ENCODE measurements at regions of chr10 and their contacts with region 1.

Region 1: DNA sequence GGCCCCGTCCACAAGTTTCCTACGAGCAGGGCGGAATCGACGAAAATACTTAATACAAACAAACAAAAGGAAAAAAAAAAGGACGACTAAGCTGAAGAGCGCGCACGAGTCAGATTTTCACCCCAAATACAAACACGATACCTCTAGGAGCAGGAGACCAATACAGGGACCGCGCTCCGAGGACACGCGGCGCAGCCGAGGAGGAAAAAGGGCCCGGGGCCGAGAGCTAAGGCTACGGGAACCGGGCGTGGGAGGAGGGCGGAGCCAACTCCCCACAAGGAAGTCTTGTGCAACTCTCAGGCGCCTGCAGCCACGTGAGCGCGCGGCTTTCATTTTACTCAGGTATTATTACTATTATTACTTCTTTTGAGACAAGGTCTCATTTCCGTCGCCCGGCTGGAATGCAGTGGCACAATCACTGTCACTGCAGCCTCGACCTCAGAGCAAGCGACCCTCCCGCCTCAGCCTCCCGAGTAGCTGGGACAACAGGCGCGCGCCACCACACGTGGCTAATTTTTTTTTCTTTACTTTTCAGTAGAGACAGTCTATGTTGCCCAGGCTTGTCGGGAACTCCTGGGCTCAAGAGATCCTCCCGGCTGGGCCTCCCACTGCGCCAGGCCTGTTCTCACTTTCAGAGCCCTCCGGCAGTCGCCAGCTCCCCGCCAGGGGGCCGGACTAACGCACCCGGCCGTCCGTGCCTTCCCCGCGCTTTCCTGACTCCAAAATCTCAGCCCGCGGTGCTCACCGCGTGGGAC is 1.2 kb downstream of the HNRNPF start:
- DNase-seq: peak; percentile 65 to 94 (median 76)
- ATAC-seq: peak; percentile 35
- H3K4me3 ChIP-seq: peak overlapping the region; percentile 80
- H3K4me3 Mint-ChIP-seq: peak overlapping the region; percentile 98
- H3K27ac ChIP-seq: peak overlapping the region; percentile 98
- H3K27ac Mint-ChIP-seq: peak overlapping the region; percentile 93
- H3K4me1 ChIP-seq: peaks cover 56% of the 10 kb centered on the region
- H3K4me1 Mint-ChIP-seq: peaks cover 45% of the 10 kb centered on the region
- H3K27me3 ChIP-seq: no peaks in the 10 kb centered on the region
- H3K27me3 Mint-ChIP-seq: no peaks in the 10 kb centered on the region
- CTCF ChIP-seq: peak; percentile 52

Region 2: GRCh38 chr10:43336641-43337318 is 71.0 kb before region 1 on chr10:
- CTCF ChIA-PET with region 1: no interaction called
- POLR2A ChIA-PET with region 1: interaction called, 12 read pairs
- intact Hi-C with region 1: no loop called
- DNase-seq: no peak
- ATAC-seq: no peak
- H3K4me3 ChIP-seq: no peak overlapping the region
- H3K4me3 Mint-ChIP-seq: no peak overlapping the region
- H3K27ac ChIP-seq: no peak overlapping the region
- H3K27ac Mint-ChIP-seq: no peak overlapping the region
- H3K4me1 ChIP-seq: peaks cover 24% of the 10 kb centered on the region
- H3K4me1 Mint-ChIP-seq: peaks cover 20% of the 10 kb centered on the region
- H3K27me3 ChIP-seq: peaks cover 0 to 5% of the 10 kb centered on the region in 2 experiments
- H3K27me3 Mint-ChIP-seq: peaks cover 8% of the 10 kb centered on the region
- CTCF ChIP-seq: no peak

Region 3: GRCh38 chr10:43372765-43373361 is 34.9 kb before region 1 on chr10:
- CTCF ChIA-PET with region 1: no interaction called
- POLR2A ChIA-PET with region 1: no interaction called
- intact Hi-C with region 1: no loop called
- DNase-seq: no peak
- ATAC-seq: no peak
- H3K4me3 ChIP-seq: no peak overlapping the region
- H3K4me3 Mint-ChIP-seq: no peak overlapping the region
- H3K27ac ChIP-seq: no peak overlapping the region
- H3K27ac Mint-ChIP-seq: no peak overlapping the region
- H3K4me1 ChIP-seq: peaks cover 8% of the 10 kb centered on the region
- H3K4me1 Mint-ChIP-seq: no peaks in the 10 kb centered on the region
- H3K27me3 ChIP-seq: no peaks in the 10 kb centered on the region
- H3K27me3 Mint-ChIP-seq: no peaks in the 10 kb centered on the region
- CTCF ChIP-seq: no peak

Region 4: GRCh38 chr10:43390759-43391158 is 17.0 kb before region 1 on chr10:
- CTCF ChIA-PET with region 1: interaction called, 11 read pairs
- POLR2A ChIA-PET with region 1: interaction called, 54 read pairs
- intact Hi-C with region 1: loop called in 1 of 2 experiments (anchors 2 kb)
- DNase-seq: peak in 9 of 14 experiments; percentile 12 to 73 (median 28)
- ATAC-seq: peak; percentile 69
- H3K4me3 ChIP-seq: no peak overlapping the region
- H3K4me3 Mint-ChIP-seq: no peak overlapping the region
- H3K27ac ChIP-seq: no peak overlapping the region
- H3K27ac Mint-ChIP-seq: peak overlapping the region; percentile 82
- H3K4me1 ChIP-seq: peaks cover 68% of the 10 kb centered on the region
- H3K4me1 Mint-ChIP-seq: peaks cover 81% of the 10 kb centered on the region
- H3K27me3 ChIP-seq: no peaks in the 10 kb centered on the region
- H3K27me3 Mint-ChIP-seq: no peaks in the 10 kb centered on the region
- CTCF ChIP-seq: peak; percentile 26

Region 5: GRCh38 chr10:43420369-43421200 is 12.8 kb after region 1 on chr10:
- CTCF ChIA-PET with region 1: no interaction called
- POLR2A ChIA-PET with region 1: interaction called, 56 read pairs
- intact Hi-C with region 1: loop called (anchors 1 kb)
- DNase-seq: peak; percentile 54 to 92 (median 72)
- ATAC-seq: peak; percentile 85
- H3K4me3 ChIP-seq: peak overlapping the region; percentile 84
- H3K4me3 Mint-ChIP-seq: peak overlapping the region; percentile 91
- H3K27ac ChIP-seq: peak overlapping the region; percentile 85 to 92
- H3K27ac Mint-ChIP-seq: peak overlapping the region; percentile 92
- H3K4me1 ChIP-seq: peaks cover 42% of the 10 kb centered on the region
- H3K4me1 Mint-ChIP-seq: peaks cover 39% of the 10 kb centered on the region
- H3K27me3 ChIP-seq: no peaks in the 10 kb centered on the region
- H3K27me3 Mint-ChIP-seq: no peaks in the 10 kb centered on the region
- CTCF ChIP-seq: peak; percentile 30

Region 6: DNA sequence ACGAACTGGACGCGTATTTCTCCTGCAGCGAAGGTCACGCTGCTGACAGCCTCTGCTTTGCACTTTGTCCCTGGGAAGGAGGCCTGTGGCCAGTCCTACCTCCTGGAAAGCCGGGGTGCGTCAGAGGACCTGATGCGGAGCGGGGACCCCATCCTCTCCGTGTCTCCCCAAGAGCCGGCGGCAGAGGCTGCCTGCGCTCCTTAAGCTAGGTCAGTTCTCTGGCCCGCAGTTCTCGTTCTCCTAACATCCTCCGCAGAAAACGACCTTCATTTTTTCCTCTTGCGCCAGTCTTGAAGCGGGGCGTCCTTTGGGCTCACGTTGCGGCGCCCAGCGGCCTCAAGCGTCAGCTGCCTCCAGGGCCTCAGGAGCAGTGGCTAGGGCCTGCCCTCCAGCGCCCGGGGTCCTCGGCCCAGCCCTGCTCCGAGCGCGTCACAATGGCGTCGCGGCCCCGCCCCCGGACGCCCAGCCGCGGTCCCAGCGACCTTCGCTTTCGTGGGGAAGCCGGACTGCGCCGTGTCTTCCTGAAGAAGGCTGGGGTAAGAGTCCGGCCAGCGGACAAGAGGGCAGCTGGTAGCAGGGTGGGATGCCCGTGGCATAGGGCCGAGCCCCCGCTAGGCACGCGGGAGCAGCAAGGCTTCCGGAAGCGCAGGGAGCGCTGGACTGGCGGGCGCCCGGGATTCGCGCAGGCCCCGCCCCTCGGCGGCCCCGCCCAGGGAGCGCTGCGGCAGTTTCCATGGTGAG is 28.8 kb after region 1 on chr10 and contains the start of gene ZNF487:
- CTCF ChIA-PET with region 1: interaction called, 5 read pairs
- POLR2A ChIA-PET with region 1: interaction called, 17 read pairs
- intact Hi-C with region 1: loop called (anchors 1 kb)
- DNase-seq: peak; percentile 69 to 94 (median 85)
- ATAC-seq: peak; percentile 86
- H3K4me3 ChIP-seq: peak within 1 kb of the TSS; percentile 92
- H3K4me3 Mint-ChIP-seq: peak within 1 kb of the TSS; percentile 97
- H3K27ac ChIP-seq: peak within 1 kb of the TSS; percentile 95 to 96
- H3K27ac Mint-ChIP-seq: peak within 1 kb of the TSS; percentile 96
- H3K4me1 ChIP-seq: peaks cover 23% of the 10 kb centered on the region
- H3K4me1 Mint-ChIP-seq: peaks cover 27% of the 10 kb centered on the region
- H3K27me3 ChIP-seq: no peaks in the 10 kb centered on the region
- H3K27me3 Mint-ChIP-seq: no peaks in the 10 kb centered on the region
- CTCF ChIP-seq: no peak
- total RNA-seq, gene ZNF487: 7.5 to 8.5 TPM

Region 7: DNA sequence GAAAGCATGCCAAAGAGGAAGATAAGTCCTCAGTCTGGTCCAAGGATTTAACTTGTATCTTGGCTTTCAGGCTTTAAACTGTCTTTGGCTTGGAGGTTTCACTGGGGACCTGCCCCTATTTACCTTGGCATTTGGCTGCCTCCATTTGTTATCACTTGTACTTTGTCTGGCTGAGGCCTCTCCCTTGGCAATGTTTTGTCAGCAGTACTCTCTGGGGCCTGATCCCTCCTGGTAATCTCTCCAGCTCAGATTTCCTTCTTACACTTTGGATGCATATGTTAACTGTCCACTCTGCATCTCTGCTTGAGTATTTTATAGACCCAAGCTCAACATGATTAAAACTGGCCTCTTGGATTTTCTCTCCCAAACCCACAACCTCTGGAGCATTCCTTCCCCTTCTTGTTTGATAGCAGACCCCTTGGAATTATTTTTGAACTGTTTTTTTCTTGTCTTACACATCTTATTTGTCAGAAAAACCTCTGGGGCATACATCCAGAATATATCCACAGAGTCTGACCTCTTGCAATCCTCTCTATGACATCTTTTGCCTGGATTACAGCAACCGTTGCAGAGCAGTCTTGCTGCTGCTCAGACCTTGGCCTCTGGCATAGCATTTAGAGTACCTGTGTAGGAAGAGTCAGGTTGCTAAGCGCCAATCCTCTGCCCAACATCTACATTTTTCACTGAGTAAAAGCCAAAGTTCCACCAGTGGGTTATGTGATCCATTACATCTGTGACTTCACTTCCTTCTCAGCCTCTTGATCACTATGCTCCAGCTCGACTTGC is 64.4 kb after region 1 on chr10:
- CTCF ChIA-PET with region 1: no interaction called
- POLR2A ChIA-PET with region 1: no interaction called
- intact Hi-C with region 1: no loop called
- DNase-seq: no peak
- ATAC-seq: no peak
- H3K4me3 ChIP-seq: no peak overlapping the region
- H3K4me3 Mint-ChIP-seq: no peak overlapping the region
- H3K27ac ChIP-seq: no peak overlapping the region
- H3K27ac Mint-ChIP-seq: no peak overlapping the region
- H3K4me1 ChIP-seq: no peaks in the 10 kb centered on the region
- H3K4me1 Mint-ChIP-seq: no peaks in the 10 kb centered on the region
- H3K27me3 ChIP-seq: no peaks in the 10 kb centered on the region
- H3K27me3 Mint-ChIP-seq: no peaks in the 10 kb centered on the region
- CTCF ChIP-seq: no peak

Measured in CD4-positive, alpha-beta T cell (primary cell).